Ovary (tissue), 10 donors: ENCODE measurements at regions of chr6 and their contacts with region 1.

Region 1: GRCh38 chr6:160348142-160349019 is at the start of gene SLC22A3:
- DNase-seq: peak; percentile 70 to 88 (median 82)
- H3K4me3 ChIP-seq: peak within 1 kb of the TSS; percentile 76
- H3K27ac ChIP-seq: peak within 1 kb of the TSS; percentile 62 to 74
- H3K4me1 ChIP-seq: peaks cover 2% of the 10 kb centered on the region
- H3K27me3 ChIP-seq: no peaks in the 10 kb centered on the region
- CTCF ChIP-seq: peak; percentile 4 to 34 (median 18)
- EP300 ChIP-seq: no peak
- POLR2A ChIP-seq: peak; percentile 37
- total RNA-seq, gene SLC22A3: 18.9 to 42.5 (median 30.5) TPM

Region 2: GRCh38 chr6:160137989-160138835 is 210.2 kb before region 1 on chr6:
- intact Hi-C with region 1: loop called in 1 of 4 experiments (anchors 5 kb)
- DNase-seq: peak; percentile 41 to 69 (median 68)
- H3K4me3 ChIP-seq: no peak overlapping the region
- H3K27ac ChIP-seq: no peak overlapping the region
- H3K4me1 ChIP-seq: peaks cover 6% of the 10 kb centered on the region
- H3K27me3 ChIP-seq: no peaks in the 10 kb centered on the region
- CTCF ChIP-seq: peak; percentile 54 to 83 (median 68)
- EP300 ChIP-seq: no peak
- POLR2A ChIP-seq: no peak